ENCODE measurements at regions of chr3 and their contacts with region 1.

Region 1: DNA sequence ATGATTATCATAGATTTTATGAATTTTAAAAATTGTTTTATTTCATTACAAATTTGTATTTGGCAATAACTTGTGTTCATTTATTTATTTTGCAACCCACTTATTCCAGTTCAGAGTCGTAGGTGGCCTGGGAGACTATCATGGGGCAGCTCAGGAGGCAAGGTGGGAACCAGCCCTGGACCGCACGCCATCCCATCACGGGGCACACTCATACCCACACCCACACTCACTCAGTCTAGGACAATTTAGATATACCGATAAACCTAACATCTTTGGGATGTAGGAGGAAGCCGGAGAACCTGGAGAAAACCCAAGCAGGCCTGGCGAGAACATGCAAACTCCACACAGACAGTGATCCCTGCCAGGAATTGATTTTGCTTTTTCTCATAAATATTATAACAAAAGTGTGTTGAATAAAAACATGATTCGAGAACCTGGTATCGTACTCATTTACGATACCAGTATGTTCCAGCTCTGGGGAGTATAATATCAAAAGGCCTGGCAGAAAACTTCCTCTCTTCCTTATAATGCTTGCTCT is 205.3 kb downstream of the NFKBIZ start:
- DNase-seq: no peak
- ATAC-seq: peak; percentile 18

Region 2: DNA sequence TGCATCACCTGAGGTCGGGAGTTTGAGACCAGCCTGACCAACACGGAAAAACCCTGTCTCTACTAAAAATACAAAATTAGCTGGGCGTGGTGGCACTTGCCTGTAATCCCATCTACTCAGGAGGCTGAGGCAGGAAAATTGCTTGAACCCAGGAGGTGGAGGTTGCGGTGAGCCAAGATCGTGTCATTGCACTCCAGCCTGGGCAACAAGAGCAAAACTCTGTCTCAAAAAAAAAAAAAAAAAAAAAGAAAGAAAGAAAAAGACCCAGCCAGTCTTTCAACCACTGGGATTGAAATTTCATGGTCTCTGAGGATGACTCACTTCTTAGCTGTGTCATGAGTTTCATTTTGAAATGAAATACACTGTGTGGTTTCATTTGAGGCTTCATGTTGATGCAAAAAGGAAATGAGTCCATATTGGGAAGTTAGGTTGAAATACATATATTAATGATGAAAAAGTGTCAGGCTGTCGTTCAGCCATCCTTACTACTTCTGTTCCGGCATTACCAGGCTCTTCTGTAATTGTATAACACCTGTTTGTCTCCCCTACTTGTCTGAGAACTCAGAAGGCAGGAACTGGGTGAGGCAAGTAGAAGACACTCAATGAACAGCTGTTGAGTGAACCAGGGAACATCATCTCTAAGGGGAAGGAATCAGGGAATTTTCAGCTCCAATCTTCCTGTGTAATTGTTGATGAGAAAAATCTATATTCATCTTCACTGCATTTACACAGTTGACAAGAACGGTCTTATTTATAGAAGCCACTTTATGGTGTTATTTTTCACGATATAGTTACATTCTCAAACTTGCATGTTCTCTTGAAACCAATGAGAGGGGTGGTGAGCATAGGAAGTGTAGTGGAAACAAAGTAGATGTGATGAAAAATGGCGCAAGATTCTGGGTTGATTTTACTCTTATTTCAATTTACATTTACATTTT is 117.9 kb before region 1 on chr3:
- intact Hi-C with region 1: no loop called
- DNase-seq: no peak
- ATAC-seq: peak; percentile 65

Region 3: GRCh38 chr3:102020735-102021134 is 33.9 kb before region 1 on chr3:
- intact Hi-C with region 1: loop called (anchors 2 kb)
- DNase-seq: no peak
- ATAC-seq: no peak

Region 4: GRCh38 chr3:102269406-102269805 is 214.8 kb after region 1 on chr3:
- intact Hi-C with region 1: no loop called
- DNase-seq: no peak
- ATAC-seq: no peak